ENCODE measurements at regions of chr4 and their contacts with region 1.

Region 1: DNA sequence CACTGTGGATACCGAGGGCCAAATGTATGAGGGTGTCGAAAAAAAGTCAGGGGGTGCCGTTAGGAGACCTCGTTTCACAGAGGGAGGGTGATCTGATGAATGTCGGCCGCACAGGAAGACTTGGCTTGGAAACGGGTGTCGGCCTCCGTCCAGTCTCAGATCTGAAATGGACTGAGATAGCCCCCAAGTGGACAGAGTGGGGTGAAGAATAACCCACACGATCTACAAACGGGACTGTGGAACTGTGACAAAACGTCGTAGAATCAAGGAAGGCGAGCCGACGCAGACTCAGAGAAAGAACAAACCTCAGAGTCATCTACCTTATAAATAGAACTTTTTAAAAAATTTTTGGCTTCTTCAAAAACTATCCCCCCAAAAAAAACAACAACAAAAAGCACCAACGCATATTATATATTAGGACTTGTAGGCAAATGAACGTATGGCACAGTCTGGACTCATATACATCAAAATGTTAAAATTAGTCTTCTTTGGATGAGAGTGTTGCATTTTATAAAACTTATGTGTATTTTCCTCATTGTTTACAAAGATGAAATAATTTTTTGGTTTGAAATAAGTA is 63.8 kb upstream of the IRF2 start:
- DNase-seq: peak; percentile 94
- H3K4me3 Mint-ChIP-seq: peak overlapping the region; percentile 93
- H3K27ac Mint-ChIP-seq: peak overlapping the region; percentile 99
- H3K4me1 Mint-ChIP-seq: peaks cover 18% of the 10 kb centered on the region
- H3K27me3 Mint-ChIP-seq: no peaks in the 10 kb centered on the region
- CTCF ChIP-seq: peak; percentile 66

Region 2: DNA sequence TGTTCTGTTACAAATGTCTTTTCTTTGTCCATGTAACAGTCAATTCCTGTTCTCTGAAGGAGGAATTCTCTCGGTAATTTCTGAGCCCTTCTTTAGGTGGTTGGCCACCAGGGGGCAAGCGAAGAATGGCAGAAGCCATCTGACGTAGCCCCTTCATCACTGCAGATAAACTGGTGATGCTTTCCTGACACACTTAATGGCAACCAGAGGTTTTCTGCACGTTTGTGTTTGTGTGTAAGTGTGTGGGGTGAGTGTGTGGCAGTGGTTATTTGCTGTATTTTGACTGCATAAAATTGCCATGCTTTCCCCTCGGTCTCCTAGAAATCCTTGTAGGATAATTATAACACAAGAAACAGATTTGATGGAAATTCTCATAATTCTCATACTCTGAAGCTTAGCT is 697.8 kb before region 1 on chr4:
- CTCF ChIA-PET with region 1: no interaction called
- POLR2A ChIA-PET with region 1: no interaction called
- intact Hi-C with region 1: loop called (anchors 5 kb)
- DNase-seq: peak; percentile 81
- H3K4me3 Mint-ChIP-seq: no peak overlapping the region
- H3K27ac Mint-ChIP-seq: no peak overlapping the region
- H3K4me1 Mint-ChIP-seq: no peaks in the 10 kb centered on the region
- H3K27me3 Mint-ChIP-seq: no peaks in the 10 kb centered on the region
- CTCF ChIP-seq: peak; percentile 79

Region 3: GRCh38 chr4:184384056-184384809 is 153.9 kb before region 1 on chr4:
- CTCF ChIA-PET with region 1: interaction called, 3 read pairs
- POLR2A ChIA-PET with region 1: interaction called, 34 read pairs
- intact Hi-C with region 1: loop called (anchors 5 kb)
- DNase-seq: peak; percentile 95
- H3K4me3 Mint-ChIP-seq: peak overlapping the region; percentile 68
- H3K27ac Mint-ChIP-seq: peak overlapping the region; percentile 75
- H3K4me1 Mint-ChIP-seq: peaks cover 28% of the 10 kb centered on the region
- H3K27me3 Mint-ChIP-seq: no peaks in the 10 kb centered on the region
- CTCF ChIP-seq: no peak

Region 4: GRCh38 chr4:184417802-184418511 is 120.2 kb before region 1 on chr4:
- CTCF ChIA-PET with region 1: interaction called, 3 read pairs
- POLR2A ChIA-PET with region 1: interaction called, 19 read pairs
- intact Hi-C with region 1: loop called (anchors 5 kb)
- DNase-seq: peak; percentile 95
- H3K4me3 Mint-ChIP-seq: peak overlapping the region; percentile 47
- H3K27ac Mint-ChIP-seq: peak overlapping the region; percentile 47
- H3K4me1 Mint-ChIP-seq: peaks cover 24% of the 10 kb centered on the region
- H3K27me3 Mint-ChIP-seq: no peaks in the 10 kb centered on the region
- CTCF ChIP-seq: no peak

Region 5: GRCh38 chr4:184528051-184528450 is 10.1 kb before region 1 on chr4:
- CTCF ChIA-PET with region 1: no interaction called
- POLR2A ChIA-PET with region 1: interaction called, 18 read pairs
- intact Hi-C with region 1: no loop called
- DNase-seq: no peak
- H3K4me3 Mint-ChIP-seq: no peak overlapping the region
- H3K27ac Mint-ChIP-seq: no peak overlapping the region
- H3K4me1 Mint-ChIP-seq: peaks cover 6% of the 10 kb centered on the region
- H3K27me3 Mint-ChIP-seq: no peaks in the 10 kb centered on the region
- CTCF ChIP-seq: no peak

Region 6: GRCh38 chr4:185203486-185204237 is 665.6 kb after region 1 on chr4 and contains the start of gene CFAP97:
- CTCF ChIA-PET with region 1: no interaction called
- POLR2A ChIA-PET with region 1: no interaction called
- intact Hi-C with region 1: no loop called
- DNase-seq: peak; percentile 86
- H3K4me3 Mint-ChIP-seq: peak within 1 kb of the TSS; percentile 90
- H3K27ac Mint-ChIP-seq: peak within 1 kb of the TSS; percentile 94
- H3K4me1 Mint-ChIP-seq: peaks cover 13% of the 10 kb centered on the region
- H3K27me3 Mint-ChIP-seq: no peaks in the 10 kb centered on the region
- CTCF ChIP-seq: no peak
- total RNA-seq, gene CFAP97: 80.2 and 95.0 TPM in 2 replicates

Measured in MCF 10A (cell line).